CD4-positive, alpha-beta T cell (primary cell): ENCODE measurements at regions of chr1 and their contacts with region 1.

Region 1: DNA sequence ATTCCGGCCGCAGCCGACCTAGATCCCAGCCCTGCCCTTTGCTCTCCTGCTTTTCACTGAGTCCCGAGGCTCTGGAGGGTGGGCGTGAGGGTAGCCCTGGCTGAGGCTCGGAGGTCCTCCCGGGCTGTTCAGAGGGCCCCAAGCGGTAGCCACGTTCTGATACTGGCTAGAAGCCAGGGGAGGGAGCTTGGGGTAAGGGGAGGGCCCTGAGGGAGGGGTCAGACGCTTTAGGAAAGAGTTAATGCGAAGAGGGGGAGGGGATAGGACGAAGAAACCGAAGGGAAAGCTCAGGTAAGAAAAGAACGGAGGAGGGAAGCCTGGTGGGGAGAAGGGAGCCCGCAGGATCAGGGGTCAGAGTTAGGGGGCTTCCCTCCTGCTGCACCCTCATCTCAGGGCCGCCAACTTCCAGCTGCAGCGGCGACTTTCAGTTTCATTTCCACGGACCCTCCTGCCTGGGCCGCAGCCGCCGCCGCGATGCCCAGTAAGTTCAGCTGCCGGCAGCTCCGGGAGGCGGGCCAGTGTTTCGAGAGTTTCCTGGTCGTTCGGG is at the start of gene MOV10:
- DNase-seq: peak; percentile 31 to 80 (median 42)
- ATAC-seq: peak; percentile 55
- H3K4me3 ChIP-seq: peak within 1 kb of the TSS; percentile 93
- H3K4me3 Mint-ChIP-seq: peak within 1 kb of the TSS; percentile 98
- H3K27ac ChIP-seq: peak within 1 kb of the TSS; percentile 38 to 68
- H3K27ac Mint-ChIP-seq: peak within 1 kb of the TSS; percentile 65
- H3K4me1 ChIP-seq: peaks cover 22% of the 10 kb centered on the region
- H3K4me1 Mint-ChIP-seq: peaks cover 69% of the 10 kb centered on the region
- H3K27me3 ChIP-seq: no peaks in the 10 kb centered on the region
- H3K27me3 Mint-ChIP-seq: no peaks in the 10 kb centered on the region
- CTCF ChIP-seq: no peak
- total RNA-seq, gene MOV10: 80.6 to 89.3 TPM

Region 2: DNA sequence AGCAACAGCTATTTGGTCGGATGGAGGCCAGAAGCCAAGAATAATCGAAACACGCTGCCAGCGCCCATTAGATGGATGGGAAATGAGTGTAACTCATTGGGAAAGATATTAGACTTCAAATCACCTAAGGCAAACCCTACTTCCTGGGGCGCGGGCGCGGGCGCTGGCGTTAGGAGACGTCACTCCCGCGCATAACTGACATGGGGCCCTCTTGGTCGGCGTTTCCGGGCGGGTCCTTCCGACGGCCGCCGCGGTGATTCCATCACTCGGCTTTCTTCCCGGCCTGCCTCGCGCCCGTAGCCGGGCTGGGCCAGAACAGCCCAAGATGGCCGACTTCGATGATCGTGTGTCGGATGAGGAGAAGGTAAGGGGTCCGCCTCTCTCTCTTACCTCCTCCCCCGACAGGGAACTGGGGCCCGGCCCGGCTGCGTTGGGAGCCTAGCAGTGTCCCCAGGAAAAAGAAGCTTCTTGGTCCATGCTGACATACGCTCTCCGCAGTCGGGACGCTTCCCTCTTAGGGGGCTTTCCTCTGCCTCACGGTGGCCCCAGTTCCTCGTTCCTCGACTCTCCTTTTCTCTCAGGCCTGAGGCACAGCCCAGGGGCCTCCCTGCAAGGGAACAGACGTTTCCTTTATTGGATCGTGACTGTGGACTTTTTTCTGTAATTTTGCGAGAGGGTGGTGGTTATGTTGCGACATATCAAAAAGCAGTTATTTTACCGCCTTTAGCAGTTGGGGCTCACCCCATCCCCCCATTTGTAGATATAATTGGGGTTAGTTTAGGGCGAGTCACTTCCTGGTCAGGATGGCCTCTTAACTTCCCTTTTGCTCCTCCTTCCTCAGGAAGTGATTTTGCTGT is 54.8 kb before region 1 on chr1 and contains the start of gene CAPZA1:
- CTCF ChIA-PET with region 1: interaction called, 6 read pairs
- POLR2A ChIA-PET with region 1: interaction called, 134 read pairs
- intact Hi-C with region 1: loop called (anchors 1 to 2 kb)
- DNase-seq: peak; percentile 80 to 96 (median 88)
- ATAC-seq: peak; percentile 67
- H3K4me3 ChIP-seq: peak within 1 kb of the TSS; percentile 69
- H3K4me3 Mint-ChIP-seq: peak within 1 kb of the TSS; percentile 100
- H3K27ac ChIP-seq: peak within 1 kb of the TSS; percentile 98 to 100
- H3K27ac Mint-ChIP-seq: peak within 1 kb of the TSS; percentile 95
- H3K4me1 ChIP-seq: peaks cover 38% of the 10 kb centered on the region
- H3K4me1 Mint-ChIP-seq: peaks cover 54% of the 10 kb centered on the region
- H3K27me3 ChIP-seq: no peaks in the 10 kb centered on the region
- H3K27me3 Mint-ChIP-seq: no peaks in the 10 kb centered on the region
- CTCF ChIP-seq: no peak
- total RNA-seq, gene CAPZA1: 166 to 179 TPM

Region 3: DNA sequence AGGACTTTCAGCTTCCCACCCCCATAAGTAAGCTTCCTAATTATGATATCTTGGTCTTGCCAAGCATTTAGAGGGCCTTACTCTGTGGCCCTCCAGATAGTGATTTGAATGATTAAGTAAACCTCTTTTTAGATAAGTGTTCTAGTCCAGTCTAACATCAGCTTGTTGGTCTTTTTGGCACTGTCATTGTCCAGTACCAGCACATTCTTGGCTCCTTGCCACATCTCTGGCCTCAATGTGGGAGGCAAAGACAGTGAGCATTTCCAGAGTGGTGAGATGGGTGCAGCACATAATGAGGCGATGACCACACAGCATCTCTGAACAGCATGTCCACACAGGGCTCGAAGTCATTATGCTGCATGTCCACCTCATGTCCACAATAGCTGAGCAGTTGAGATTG is 48.8 kb before region 1 on chr1:
- CTCF ChIA-PET with region 1: interaction called, 6 read pairs
- POLR2A ChIA-PET with region 1: interaction called, 134 read pairs
- intact Hi-C with region 1: loop called in 1 of 2 experiments (anchors 2 kb)
- DNase-seq: no peak
- ATAC-seq: no peak
- H3K4me3 ChIP-seq: no peak overlapping the region
- H3K4me3 Mint-ChIP-seq: no peak overlapping the region
- H3K27ac ChIP-seq: no peak overlapping the region
- H3K27ac Mint-ChIP-seq: peak overlapping the region; percentile 68
- H3K4me1 ChIP-seq: peaks cover 60% of the 10 kb centered on the region
- H3K4me1 Mint-ChIP-seq: peaks cover 80% of the 10 kb centered on the region
- H3K27me3 ChIP-seq: no peaks in the 10 kb centered on the region
- H3K27me3 Mint-ChIP-seq: no peaks in the 10 kb centered on the region
- CTCF ChIP-seq: no peak

Region 4: GRCh38 chr1:112637254-112638116 is 37.0 kb before region 1 on chr1:
- CTCF ChIA-PET with region 1: interaction called, 12 read pairs
- POLR2A ChIA-PET with region 1: interaction called, 12 read pairs
- intact Hi-C with region 1: loop called in 1 of 2 experiments (anchors 5 kb)
- DNase-seq: no peak
- ATAC-seq: no peak
- H3K4me3 ChIP-seq: no peak overlapping the region
- H3K4me3 Mint-ChIP-seq: peak overlapping the region; percentile 21
- H3K27ac ChIP-seq: no peak overlapping the region
- H3K27ac Mint-ChIP-seq: peak overlapping the region; percentile 78
- H3K4me1 ChIP-seq: peaks cover 17% of the 10 kb centered on the region
- H3K4me1 Mint-ChIP-seq: peaks cover 66% of the 10 kb centered on the region
- H3K27me3 ChIP-seq: no peaks in the 10 kb centered on the region
- H3K27me3 Mint-ChIP-seq: no peaks in the 10 kb centered on the region
- CTCF ChIP-seq: no peak

Region 5: DNA sequence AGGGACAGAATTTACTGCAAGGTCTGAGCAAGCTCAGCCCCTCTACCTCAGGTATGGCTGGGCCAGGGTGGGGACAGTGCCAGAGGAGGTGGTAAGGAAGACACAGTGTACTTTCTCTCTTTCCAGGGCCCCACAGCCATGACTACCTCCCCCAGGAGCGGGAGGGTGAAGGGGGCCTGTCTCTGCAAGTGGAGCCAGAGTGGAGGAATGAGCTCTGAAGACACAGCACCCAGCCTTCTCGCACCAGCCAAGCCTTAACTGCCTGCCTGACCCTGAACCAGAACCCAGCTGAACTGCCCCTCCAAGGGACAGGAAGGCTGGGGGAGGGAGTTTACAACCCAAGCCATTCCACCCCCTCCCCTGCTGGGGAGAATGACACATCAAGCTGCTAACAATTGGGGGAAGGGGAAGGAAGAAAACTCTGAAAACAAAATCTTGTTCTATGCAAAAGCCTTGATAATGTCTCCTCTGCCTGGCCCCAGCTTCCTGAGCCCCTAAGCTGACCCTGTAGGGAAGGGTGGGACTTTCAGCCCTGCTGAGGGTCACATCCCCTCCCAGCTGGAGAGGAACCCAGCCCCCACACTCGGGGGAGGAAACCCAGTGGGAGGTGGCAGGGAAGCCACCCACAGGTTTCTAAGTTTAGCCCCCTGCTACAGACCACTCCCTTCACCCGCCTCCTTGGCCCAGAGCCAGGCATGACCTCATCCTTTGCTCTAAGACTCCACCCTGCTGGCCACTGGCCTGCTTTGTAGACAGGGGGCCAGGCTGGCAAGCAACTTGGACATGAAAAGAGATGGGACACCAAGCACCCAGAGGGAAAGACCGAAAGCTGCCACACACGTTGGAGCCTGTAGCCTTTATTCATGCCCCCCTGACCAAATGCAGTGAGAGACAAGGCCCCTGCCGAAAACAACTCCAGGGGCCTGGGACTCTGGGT is 26.0 kb after region 1 on chr1:
- CTCF ChIA-PET with region 1: interaction called, 3 read pairs
- POLR2A ChIA-PET with region 1: interaction called, 46 read pairs
- intact Hi-C with region 1: loop called in 1 of 2 experiments (anchors 2 kb)
- DNase-seq: peak; percentile 43 to 78 (median 61)
- ATAC-seq: peak; percentile 49
- H3K4me3 ChIP-seq: no peak overlapping the region
- H3K4me3 Mint-ChIP-seq: no peak overlapping the region
- H3K27ac ChIP-seq: peak overlapping the region; percentile 34 to 52
- H3K27ac Mint-ChIP-seq: peak overlapping the region; percentile 34
- H3K4me1 ChIP-seq: peaks cover 40% of the 10 kb centered on the region
- H3K4me1 Mint-ChIP-seq: peaks cover 53% of the 10 kb centered on the region
- H3K27me3 ChIP-seq: no peaks in the 10 kb centered on the region
- H3K27me3 Mint-ChIP-seq: no peaks in the 10 kb centered on the region
- CTCF ChIP-seq: no peak

Region 6: DNA sequence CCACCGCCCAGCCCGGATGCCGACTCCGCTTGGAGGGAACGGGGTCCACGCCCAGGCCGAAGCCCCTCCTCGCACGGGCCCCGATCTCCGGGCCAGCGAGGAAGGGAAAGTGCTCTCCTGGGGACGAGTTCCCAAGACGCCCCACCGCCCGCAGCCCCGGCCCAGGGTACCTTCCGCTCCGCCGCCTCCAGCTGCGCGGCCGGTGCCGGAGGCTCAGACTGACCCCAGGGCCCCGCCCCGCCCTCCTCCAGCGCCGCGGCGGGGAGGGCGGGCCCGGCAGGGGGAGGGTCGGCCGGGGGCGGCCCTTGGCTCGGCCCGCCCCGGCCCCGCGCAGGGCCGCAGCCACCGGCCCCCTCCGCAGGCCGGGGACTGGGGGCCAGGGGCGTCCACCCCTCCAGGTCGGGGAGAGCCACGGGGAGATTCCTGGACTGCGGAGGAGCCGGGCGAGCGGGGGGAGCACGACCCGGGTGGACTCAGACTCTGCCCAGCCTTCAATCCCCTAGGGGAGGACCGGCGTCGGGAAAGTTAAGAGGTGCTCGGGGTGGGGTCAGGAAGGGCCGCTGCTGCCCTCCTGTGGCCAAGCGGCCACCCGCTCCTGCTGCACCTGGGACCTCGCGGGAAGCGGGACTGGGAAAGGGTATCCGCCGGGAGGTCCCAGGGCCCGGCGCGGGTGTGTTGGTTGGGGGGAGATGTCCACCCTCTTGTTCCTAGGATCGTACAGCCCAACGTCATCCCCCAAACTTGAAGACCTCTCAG is 32.6 kb after region 1 on chr1 and contains the start of gene RHOC:
- CTCF ChIA-PET with region 1: interaction called, 3 read pairs
- POLR2A ChIA-PET with region 1: interaction called, 46 read pairs
- intact Hi-C with region 1: no loop called
- DNase-seq: peak in 13 of 14 experiments; percentile 23 to 82 (median 53)
- ATAC-seq: peak; percentile 57
- H3K4me3 ChIP-seq: peak within 1 kb of the TSS; percentile 60
- H3K4me3 Mint-ChIP-seq: peak within 1 kb of the TSS; percentile 80
- H3K27ac ChIP-seq: peak within 1 kb of the TSS in 1 of 2 donors; percentile 60
- H3K27ac Mint-ChIP-seq: peak within 1 kb of the TSS; percentile 59
- H3K4me1 ChIP-seq: peaks cover 37% of the 10 kb centered on the region
- H3K4me1 Mint-ChIP-seq: peaks cover 50% of the 10 kb centered on the region
- H3K27me3 ChIP-seq: no peaks in the 10 kb centered on the region
- H3K27me3 Mint-ChIP-seq: no peaks in the 10 kb centered on the region
- CTCF ChIP-seq: peak; percentile 79
- total RNA-seq, gene RHOC: 11.9 to 12.7 TPM